Activated CD4-positive, alpha-beta memory T cell treated with anti-CD3 and anti-CD28 coated beads for 36 hours (primary cell): ENCODE measurements at regions of chr6 and their contacts with region 1.

Region 1: DNA sequence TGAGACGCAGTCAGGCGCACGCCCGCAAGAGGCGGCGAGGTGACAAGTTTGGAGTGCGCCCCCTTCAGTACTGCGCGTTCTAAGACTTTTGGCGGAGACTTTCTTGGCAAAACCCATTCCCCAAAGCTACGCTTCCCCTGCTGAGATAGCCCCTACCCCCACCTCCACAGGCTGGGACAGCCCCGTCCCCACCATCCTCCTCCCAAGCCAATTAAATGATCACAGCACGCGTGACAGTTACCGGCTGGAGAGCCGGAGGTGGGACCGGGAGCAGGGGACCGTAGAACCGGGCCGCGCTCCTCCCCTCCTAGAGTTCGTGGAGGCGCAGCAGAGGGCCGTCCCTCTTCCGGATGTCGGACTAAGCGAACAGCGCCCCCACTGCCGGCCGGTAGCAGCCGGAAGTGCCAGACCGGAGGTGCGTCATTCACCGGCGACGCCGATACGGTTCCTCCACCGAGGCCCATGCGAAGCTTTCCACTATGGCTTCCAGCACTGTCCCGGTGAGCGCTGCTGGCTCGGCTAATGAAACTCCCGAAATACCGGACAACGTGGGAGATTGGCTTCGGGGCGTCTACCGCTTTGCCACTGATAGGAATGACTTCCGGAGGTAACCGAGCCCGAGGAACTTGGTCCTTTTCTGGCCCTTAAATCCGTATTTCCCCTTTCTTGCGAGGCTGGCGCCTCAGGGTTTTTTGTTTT is at the start of gene TOMM6:
- DNase-seq: peak; percentile 98
- H3K4me3 Mint-ChIP-seq: peak within 1 kb of the TSS; percentile 92
- H3K27ac Mint-ChIP-seq: peak within 1 kb of the TSS; percentile 90
- H3K4me1 Mint-ChIP-seq: peaks cover 20% of the 10 kb centered on the region
- H3K27me3 Mint-ChIP-seq: no peaks in the 10 kb centered on the region
- total RNA-seq, gene TOMM6: 264 to 280 TPM

Region 2: GRCh38 chr6:41638002-41638934 is 149.1 kb before region 1 on chr6 and contains the start of gene MDFI:
- CTCF ChIA-PET with region 1: no interaction called
- POLR2A ChIA-PET with region 1: no interaction called
- intact Hi-C with region 1: no loop called
- DNase-seq: no peak
- H3K4me3 Mint-ChIP-seq: peak within 1 kb of the TSS; percentile 54
- H3K27ac Mint-ChIP-seq: no peak within 1 kb of the TSS
- H3K4me1 Mint-ChIP-seq: peaks cover 5% of the 10 kb centered on the region
- H3K27me3 Mint-ChIP-seq: peaks cover 48% of the 10 kb centered on the region
- total RNA-seq, gene MDFI: not detected

Region 3: GRCh38 chr6:41705996-41706835 is 81.2 kb before region 1 on chr6:
- CTCF ChIA-PET with region 1: interaction called, 19 read pairs
- POLR2A ChIA-PET with region 1: interaction called, 3 read pairs
- intact Hi-C with region 1: no loop called
- DNase-seq: peak; percentile 90
- H3K4me3 Mint-ChIP-seq: peak overlapping the region; percentile 38
- H3K27ac Mint-ChIP-seq: peak overlapping the region; percentile 89
- H3K4me1 Mint-ChIP-seq: peaks cover 36% of the 10 kb centered on the region
- H3K27me3 Mint-ChIP-seq: no peaks in the 10 kb centered on the region

Region 4: DNA sequence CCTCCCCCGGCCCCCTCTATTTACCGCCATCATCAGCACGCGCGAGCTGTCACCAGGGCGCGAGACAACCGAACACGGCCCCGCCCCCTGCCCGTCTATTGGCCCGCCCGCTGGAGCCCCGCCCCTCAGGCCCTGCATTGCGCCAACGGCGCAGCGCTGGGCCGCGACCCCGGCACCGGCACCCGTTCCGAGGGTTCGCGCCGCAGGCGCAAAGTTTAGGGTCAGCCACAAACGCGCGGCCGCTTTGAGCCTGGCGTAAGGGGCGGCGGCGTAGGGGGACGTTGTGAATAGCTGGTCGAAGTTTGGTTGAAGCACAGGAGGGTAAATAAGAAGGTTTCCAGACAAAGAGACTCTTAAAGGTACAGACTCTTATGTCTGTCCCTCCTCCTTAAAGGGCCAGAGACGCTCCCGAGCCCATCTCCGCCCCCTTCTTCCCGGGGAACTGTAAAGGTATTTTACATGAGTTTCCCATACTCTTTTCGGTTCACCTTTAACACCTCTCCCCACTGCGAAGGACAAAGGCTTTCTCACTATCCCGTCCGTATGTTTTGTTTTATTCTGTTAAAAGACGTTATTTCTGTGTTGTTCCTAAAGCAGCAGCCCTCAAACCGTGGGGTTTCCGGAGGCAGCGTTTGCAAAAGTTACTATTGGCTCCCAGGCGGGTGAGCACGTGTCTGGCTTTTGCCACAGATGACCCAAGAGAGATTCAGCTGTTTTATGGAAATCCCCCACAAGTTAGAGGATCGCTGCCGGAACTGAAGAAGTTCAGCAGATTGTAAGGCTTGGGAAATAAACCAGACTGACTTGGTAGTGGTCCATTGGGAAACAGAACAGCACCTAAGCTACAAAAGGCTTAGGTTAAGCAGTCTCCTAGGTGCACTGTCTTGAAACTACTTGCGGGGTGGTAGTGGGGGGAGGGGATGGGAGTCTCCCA is 108.2 kb after region 1 on chr6 and contains the start of gene USP49:
- CTCF ChIA-PET with region 1: interaction called, 19 read pairs
- POLR2A ChIA-PET with region 1: interaction called, 10 read pairs
- intact Hi-C with region 1: loop called (anchors 1 kb)
- DNase-seq: peak; percentile 94
- H3K4me3 Mint-ChIP-seq: no peak within 1 kb of the TSS
- H3K27ac Mint-ChIP-seq: peak within 1 kb of the TSS; percentile 89
- H3K4me1 Mint-ChIP-seq: peaks cover 9% of the 10 kb centered on the region
- H3K27me3 Mint-ChIP-seq: no peaks in the 10 kb centered on the region
- total RNA-seq, gene USP49: 6.1 to 6.3 TPM

Region 5: DNA sequence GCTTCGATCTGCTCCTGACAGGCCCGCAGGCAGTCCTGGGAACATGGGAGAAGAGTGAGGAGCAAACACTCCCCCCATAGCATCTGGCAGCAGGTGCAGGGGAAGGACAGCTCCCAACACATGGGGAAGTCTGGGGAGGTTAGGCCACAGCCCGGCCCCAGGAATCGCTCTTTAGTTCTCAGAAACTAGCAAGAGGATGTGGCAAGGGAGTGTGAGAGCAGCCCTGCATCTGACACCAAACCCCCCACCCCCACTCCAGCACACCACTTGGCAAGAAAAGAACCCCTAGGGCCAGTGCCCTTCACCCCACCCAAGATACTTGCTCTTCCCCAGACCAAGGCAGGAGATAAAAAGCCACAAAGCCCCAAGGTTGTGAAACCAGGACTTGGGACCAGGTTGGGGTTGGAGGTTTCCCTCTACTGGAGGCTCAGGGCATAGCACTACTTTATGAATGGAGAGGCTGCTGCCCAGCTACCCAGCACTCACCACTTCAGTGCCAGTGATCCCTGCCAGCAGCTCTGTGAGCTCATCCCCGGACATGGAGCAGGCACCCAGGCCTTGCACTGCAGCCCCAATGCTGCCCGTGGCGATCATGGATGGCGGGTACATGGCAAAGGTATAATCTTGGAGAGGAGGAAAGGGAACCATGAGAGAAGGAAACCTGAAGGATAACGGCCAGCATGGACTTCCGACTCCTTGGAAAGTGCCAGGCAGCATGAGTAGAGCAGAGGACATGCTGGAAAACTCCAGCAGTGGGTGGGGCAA is 148.9 kb after region 1 on chr6:
- CTCF ChIA-PET with region 1: interaction called, 13 read pairs
- POLR2A ChIA-PET with region 1: no interaction called
- intact Hi-C with region 1: loop called (anchors 5 kb)
- DNase-seq: peak; percentile 87
- H3K4me3 Mint-ChIP-seq: peak overlapping the region; percentile 99
- H3K27ac Mint-ChIP-seq: peak overlapping the region; percentile 90
- H3K4me1 Mint-ChIP-seq: peaks cover 53% of the 10 kb centered on the region
- H3K27me3 Mint-ChIP-seq: no peaks in the 10 kb centered on the region